Activated CD4-positive, alpha-beta T cell treated with anti-CD3 and anti-CD28 coated beads for 36 hours (primary cell): ENCODE measurements at regions of chr19 and their contacts with region 1.

Region 1: GRCh38 chr19:58154679-58155648 is 4.4 kb upstream of the ZNF329 start:
- DNase-seq: peak; percentile 99
- ATAC-seq: peak; percentile 87
- H3K4me3 Mint-ChIP-seq: peak overlapping the region; percentile 71
- H3K27ac Mint-ChIP-seq: peak overlapping the region; percentile 51
- H3K4me1 Mint-ChIP-seq: peaks cover 10% of the 10 kb centered on the region
- H3K27me3 Mint-ChIP-seq: no peaks in the 10 kb centered on the region

Region 2: GRCh38 chr19:56633021-56633420 is 1521.9 kb before region 1 on chr19:
- CTCF ChIA-PET with region 1: no interaction called
- POLR2A ChIA-PET with region 1: no interaction called
- intact Hi-C with region 1: no loop called
- DNase-seq: no peak
- ATAC-seq: no peak
- H3K4me3 Mint-ChIP-seq: no peak overlapping the region
- H3K27ac Mint-ChIP-seq: no peak overlapping the region
- H3K4me1 Mint-ChIP-seq: no peaks in the 10 kb centered on the region
- H3K27me3 Mint-ChIP-seq: no peaks in the 10 kb centered on the region

Region 3: GRCh38 chr19:57240311-57241090 is 914.5 kb before region 1 on chr19 and contains the start of gene ZNF805:
- CTCF ChIA-PET with region 1: interaction called, 3 read pairs
- POLR2A ChIA-PET with region 1: no interaction called
- intact Hi-C with region 1: loop called in 1 of 2 experiments (anchors 1 kb)
- DNase-seq: peak; percentile 97
- ATAC-seq: peak; percentile 95
- H3K4me3 Mint-ChIP-seq: peak within 1 kb of the TSS; percentile 80
- H3K27ac Mint-ChIP-seq: peak within 1 kb of the TSS; percentile 92
- H3K4me1 Mint-ChIP-seq: peaks cover 23% of the 10 kb centered on the region
- H3K27me3 Mint-ChIP-seq: no peaks in the 10 kb centered on the region
- total RNA-seq, gene ZNF805: 6.4 to 7.1 TPM

Region 4: DNA sequence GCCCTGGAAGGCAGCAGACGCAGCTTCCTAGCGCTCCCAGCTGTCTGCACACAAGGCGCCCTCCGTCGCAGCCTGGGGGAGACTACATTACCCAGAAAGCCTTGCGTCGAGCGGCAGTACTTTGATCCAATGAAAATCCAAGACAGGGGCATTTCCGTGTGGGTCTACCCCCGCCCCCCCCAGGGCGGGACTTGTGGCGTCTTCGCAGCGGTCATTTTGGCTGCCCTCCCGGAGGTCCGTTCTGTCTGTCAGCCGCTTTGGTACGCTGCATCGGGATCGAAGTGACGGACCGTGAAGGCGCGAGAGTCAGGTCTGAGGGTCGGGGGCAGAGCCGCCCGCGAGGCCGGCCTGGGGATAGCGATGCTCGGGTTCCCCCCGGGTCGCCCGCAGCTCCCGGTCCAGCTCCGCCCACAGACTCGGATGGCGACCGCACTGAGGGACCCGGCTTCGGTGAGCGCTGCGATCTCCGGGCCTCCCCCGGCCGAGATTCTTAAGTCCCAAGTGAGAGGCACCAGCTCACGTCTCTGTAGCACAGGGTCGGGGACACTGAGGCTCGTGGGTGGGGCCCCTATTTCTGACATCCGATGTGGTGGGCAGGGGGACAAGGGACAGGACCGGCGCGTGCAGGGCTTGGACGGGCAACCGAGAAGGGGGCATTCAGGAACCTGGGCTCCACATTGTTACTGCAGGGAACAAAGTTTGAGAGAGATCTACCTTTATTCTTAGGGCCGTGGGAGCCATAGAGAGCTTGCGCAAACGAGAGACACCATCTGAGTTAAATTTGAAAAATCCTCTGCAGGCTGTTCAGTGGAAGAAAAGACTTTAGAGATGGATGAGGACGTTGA is 521.8 kb before region 1 on chr19 and contains the start of gene ZNF211:
- CTCF ChIA-PET with region 1: no interaction called
- POLR2A ChIA-PET with region 1: no interaction called
- intact Hi-C with region 1: loop called (anchors 2 to 5 kb)
- DNase-seq: peak; percentile 91
- ATAC-seq: peak; percentile 100
- H3K4me3 Mint-ChIP-seq: peak within 1 kb of the TSS; percentile 96
- H3K27ac Mint-ChIP-seq: peak within 1 kb of the TSS; percentile 86
- H3K4me1 Mint-ChIP-seq: peaks cover 19% of the 10 kb centered on the region
- H3K27me3 Mint-ChIP-seq: no peaks in the 10 kb centered on the region
- total RNA-seq, gene ZNF211: 8.9 to 9.5 TPM

Region 5: GRCh38 chr19:57769345-57770131 is 385.4 kb before region 1 on chr19 and contains the start of gene ZNF586:
- CTCF ChIA-PET with region 1: no interaction called
- POLR2A ChIA-PET with region 1: no interaction called
- intact Hi-C with region 1: loop called in 1 of 2 experiments (anchors 1 kb)
- DNase-seq: peak; percentile 93
- ATAC-seq: peak; percentile 99
- H3K4me3 Mint-ChIP-seq: peak within 1 kb of the TSS; percentile 90
- H3K27ac Mint-ChIP-seq: peak within 1 kb of the TSS; percentile 93
- H3K4me1 Mint-ChIP-seq: peaks cover 25% of the 10 kb centered on the region
- H3K27me3 Mint-ChIP-seq: no peaks in the 10 kb centered on the region
- total RNA-seq, gene ZNF586: 20.3 to 20.5 TPM

Region 6: DNA sequence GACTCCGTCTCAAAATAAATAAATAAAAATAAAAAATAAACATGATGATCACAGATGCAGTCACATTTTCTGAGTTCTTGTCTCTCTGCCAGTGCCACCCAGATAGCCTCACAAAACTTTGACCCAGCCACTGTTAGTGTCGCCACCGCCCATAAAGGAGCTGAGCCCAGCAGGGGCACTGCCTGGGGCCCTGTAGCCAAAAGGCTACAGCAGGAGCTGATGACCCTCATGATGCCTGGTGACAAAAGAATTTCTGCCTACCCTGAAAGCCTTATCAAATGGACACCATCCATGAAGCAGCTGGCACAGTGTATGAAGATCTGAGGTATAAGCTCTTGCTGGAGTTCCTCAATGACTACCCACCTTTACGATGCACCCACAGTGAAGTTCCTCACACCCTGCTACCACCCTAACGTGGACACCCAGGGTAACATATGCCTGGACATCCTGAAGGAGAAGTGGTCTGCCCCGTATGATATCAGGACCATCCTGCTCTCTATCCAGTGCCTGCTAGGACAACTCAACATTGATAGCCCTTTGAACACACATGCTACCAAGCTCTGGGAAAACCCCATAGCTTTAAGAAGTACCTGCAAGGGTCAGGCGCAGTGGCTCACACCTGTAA is 287.0 kb before region 1 on chr19:
- CTCF ChIA-PET with region 1: no interaction called
- POLR2A ChIA-PET with region 1: no interaction called
- intact Hi-C with region 1: no loop called
- DNase-seq: no peak
- ATAC-seq: no peak
- H3K4me3 Mint-ChIP-seq: no peak overlapping the region
- H3K27ac Mint-ChIP-seq: no peak overlapping the region
- H3K4me1 Mint-ChIP-seq: no peaks in the 10 kb centered on the region
- H3K27me3 Mint-ChIP-seq: no peaks in the 10 kb centered on the region

Region 7: DNA sequence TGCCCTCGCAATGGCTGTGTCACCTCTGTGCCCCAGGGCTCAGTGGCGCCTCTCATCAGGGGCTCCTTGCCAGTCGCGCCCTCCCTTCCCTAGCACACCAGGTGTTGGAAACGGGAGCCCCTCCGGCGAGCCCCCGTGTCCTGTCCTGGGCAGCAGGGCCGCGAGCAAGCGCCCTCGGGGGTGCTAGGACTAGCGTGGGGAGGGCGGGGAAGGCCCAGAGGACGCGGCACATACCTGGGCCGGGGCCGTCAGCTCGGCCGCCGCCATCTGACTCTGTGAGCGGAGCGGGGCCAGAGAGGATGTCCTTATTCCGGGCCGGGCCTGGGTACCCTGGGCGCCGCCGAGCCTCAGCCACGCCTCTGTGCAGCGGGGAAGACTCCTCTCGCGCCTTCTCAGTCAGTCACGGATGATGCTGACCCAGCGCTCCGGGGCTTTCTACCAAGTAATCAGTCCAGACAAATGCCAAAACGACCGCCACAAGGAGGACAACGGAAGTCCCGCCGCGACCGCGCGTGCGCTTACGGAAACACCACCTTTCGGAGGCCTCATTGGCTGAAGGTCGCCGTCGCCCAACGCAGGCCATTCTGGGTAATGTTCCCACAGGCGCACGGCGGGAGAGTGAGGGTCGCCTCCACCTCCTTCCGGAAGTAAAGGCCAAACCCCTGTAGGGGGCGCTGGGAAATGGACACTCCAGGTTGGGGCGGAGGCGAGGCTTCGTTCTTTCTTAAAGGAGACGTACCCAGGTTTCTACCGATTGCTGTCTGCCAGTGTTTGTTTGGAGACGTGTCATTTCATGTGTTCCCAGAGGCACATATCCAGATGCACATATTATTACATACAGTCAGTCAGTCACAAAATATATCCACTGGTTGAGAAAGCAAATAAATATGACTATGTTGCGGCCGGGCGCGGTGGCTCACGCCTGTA is 207.5 kb before region 1 on chr19 and contains the start of gene ZNF256:
- CTCF ChIA-PET with region 1: no interaction called
- POLR2A ChIA-PET with region 1: no interaction called
- intact Hi-C with region 1: loop called in 1 of 2 experiments (anchors 1 kb)
- DNase-seq: peak; percentile 95
- ATAC-seq: peak; percentile 99
- H3K4me3 Mint-ChIP-seq: peak within 1 kb of the TSS; percentile 87
- H3K27ac Mint-ChIP-seq: peak within 1 kb of the TSS; percentile 90
- H3K4me1 Mint-ChIP-seq: peaks cover 16% of the 10 kb centered on the region
- H3K27me3 Mint-ChIP-seq: no peaks in the 10 kb centered on the region
- total RNA-seq, gene ZNF256: 6.3 to 6.9 TPM

Region 8: DNA sequence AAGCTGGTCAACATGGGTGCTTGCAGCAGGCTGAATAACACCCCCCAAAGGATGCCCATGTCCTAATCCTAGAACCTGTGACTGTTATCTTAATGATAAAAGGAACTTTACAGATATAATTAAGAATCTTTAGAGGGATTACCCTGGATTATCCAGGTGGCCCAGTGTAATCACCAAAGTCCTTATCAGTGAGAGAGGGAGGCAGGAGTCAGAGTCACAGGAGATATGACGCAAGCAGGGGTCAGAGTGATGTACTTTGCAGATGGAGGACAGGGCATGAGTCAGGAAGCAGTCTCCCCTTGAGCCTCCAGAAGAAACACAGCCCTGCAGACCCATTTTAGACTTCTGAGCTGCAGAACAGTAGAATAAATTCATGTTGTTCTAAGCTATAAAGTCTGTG is 162.1 kb before region 1 on chr19:
- CTCF ChIA-PET with region 1: no interaction called
- POLR2A ChIA-PET with region 1: no interaction called
- intact Hi-C with region 1: no loop called
- DNase-seq: no peak
- ATAC-seq: no peak
- H3K4me3 Mint-ChIP-seq: no peak overlapping the region
- H3K27ac Mint-ChIP-seq: no peak overlapping the region
- H3K4me1 Mint-ChIP-seq: no peaks in the 10 kb centered on the region
- H3K27me3 Mint-ChIP-seq: no peaks in the 10 kb centered on the region

Region 9: DNA sequence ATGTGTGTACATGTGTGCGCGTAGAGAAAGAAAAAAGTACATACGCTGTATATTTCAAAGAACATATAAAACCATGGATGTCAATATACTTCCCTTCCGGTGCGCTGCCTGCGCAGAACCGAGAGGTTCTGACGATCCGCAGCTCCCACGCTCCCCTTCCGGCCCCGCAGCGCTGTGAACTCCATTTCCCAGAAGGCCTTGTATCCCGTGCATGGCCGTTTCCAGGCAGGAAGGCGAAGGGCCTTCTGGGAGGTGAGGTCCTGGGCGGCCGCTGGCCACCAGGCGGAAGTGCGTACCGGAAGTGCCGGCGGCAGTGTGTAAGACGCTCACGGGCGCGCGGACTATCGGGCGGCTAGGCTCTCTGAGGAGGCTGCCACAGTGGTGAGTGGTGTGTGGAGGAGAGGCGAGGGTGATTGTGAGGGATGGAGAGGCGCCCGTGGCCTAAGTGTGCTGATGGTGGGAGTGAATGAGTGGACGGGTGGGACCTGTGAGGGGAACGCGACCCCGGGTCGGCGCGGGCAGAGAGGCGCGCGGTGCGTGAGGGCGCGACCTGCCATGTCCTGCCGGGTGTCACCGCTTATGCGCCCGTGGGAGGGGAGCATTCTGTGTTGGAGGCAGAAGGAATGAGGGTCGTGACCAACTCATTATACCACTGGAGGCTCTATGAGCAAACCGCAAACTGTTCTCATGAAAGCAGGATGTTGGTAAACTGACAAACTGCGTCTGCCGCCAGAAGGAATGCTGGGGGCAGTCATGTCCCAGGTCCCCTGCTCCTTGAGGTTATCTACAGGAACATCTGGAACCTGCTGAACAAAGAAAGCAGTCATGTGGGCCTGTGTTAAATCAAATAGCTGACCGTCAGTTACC is 150.3 kb after region 1 on chr19 and contains the start of gene ERVK3-1:
- CTCF ChIA-PET with region 1: no interaction called
- POLR2A ChIA-PET with region 1: no interaction called
- intact Hi-C with region 1: loop called in 1 of 2 experiments (anchors 1 kb)
- DNase-seq: peak; percentile 97
- ATAC-seq: peak; percentile 98
- H3K4me3 Mint-ChIP-seq: peak within 1 kb of the TSS; percentile 99
- H3K27ac Mint-ChIP-seq: peak within 1 kb of the TSS; percentile 100
- H3K4me1 Mint-ChIP-seq: peaks cover 52% of the 10 kb centered on the region
- H3K27me3 Mint-ChIP-seq: no peaks in the 10 kb centered on the region
- total RNA-seq, gene ERVK3-1: 38.6 to 53.6 TPM